Heart left ventricle (tissue), 16 donors: ENCODE measurements at regions of chr5 and their contacts with region 1.

Region 1: GRCh38 chr5:40260361-40260760 is 419.4 kb upstream of the PTGER4 start:
- DNase-seq: peak in 3 of 5 donors; percentile 23 to 57 (median 29)
- ATAC-seq: no peak
- H3K4me3 ChIP-seq: no peak overlapping the region
- H3K27ac ChIP-seq: no peak overlapping the region
- H3K4me1 ChIP-seq: peaks cover 0 to 22% (median 0%) of the 10 kb centered on the region in 12 donors
- H3K27me3 ChIP-seq: no peaks in the 10 kb centered on the region
- CTCF ChIP-seq: no peak
- POLR2A ChIP-seq: no peak

Region 2: GRCh38 chr5:40112875-40113274 is 147.5 kb before region 1 on chr5:
- intact Hi-C with region 1: no loop called
- DNase-seq: no peak
- ATAC-seq: no peak
- H3K4me3 ChIP-seq: no peak overlapping the region
- H3K27ac ChIP-seq: no peak overlapping the region
- H3K4me1 ChIP-seq: peaks cover 0 to 14% (median 0%) of the 10 kb centered on the region in 12 donors
- H3K27me3 ChIP-seq: no peaks in the 10 kb centered on the region
- CTCF ChIP-seq: no peak
- POLR2A ChIP-seq: no peak

Region 3: DNA sequence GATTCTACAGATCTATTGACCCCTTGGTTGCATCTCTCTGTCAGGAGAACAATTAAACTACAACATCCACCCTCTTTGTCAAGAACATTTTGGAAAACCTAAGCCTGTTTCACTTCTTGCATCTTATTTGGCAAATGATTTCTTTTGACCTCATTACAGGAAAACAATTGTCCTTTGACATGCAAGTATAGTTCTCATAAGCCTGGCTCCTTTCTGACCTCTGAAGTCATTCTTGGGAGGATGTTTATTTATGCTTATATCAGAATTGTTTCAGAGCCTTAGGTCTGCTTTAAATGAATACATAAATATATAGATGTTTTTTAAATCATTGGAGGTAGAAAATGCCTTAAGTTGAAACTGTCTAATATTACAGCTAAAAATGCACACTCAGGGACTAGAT is 58.0 kb after region 1 on chr5:
- intact Hi-C with region 1: loop called in 1 of 10 experiments (anchors 10 kb)
- DNase-seq: no peak
- ATAC-seq: peak in 1 of 4 donors; percentile 66
- H3K4me3 ChIP-seq: no peak overlapping the region
- H3K27ac ChIP-seq: peak overlapping the region in 5 of 12 donors; percentile 4 to 44 (median 35)
- H3K4me1 ChIP-seq: peaks cover 0 to 9% (median 1%) of the 10 kb centered on the region in 12 donors
- H3K27me3 ChIP-seq: no peaks in the 10 kb centered on the region
- CTCF ChIP-seq: no peak
- POLR2A ChIP-seq: no peak